ENCODE measurements at regions of chr5 and their contacts with region 1.

Region 1: DNA sequence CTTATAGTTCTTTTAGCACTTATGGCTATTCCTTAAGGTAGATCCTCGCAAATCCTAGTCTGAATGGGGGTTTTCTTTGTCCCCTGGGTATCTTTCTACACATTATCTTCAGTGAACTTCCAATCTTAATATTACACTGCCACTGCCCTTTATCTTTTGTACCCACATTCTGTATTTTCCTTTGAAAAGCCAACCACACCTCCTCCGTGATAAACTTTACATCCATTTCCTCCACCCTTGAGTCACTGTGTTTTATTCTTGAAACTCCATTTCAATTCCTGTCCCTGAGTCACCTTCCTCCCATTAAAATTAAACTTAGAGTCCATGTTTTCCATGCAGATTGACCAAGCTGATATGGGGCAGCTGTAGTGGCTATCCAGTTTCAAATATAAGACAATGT is 43.2 kb upstream of the RICTOR start:
- DNase-seq: no peak
- H3K4me3 ChIP-seq: no peak overlapping the region
- H3K4me3 Mint-ChIP-seq: no peak overlapping the region
- H3K27ac ChIP-seq: no peak overlapping the region
- H3K27ac Mint-ChIP-seq: peak overlapping the region in 6 of 7 donors; percentile 61 to 78 (median 70)
- H3K4me1 ChIP-seq: peaks cover 26% of the 10 kb centered on the region
- H3K4me1 Mint-ChIP-seq: peaks cover 20 to 44% (median 27%) of the 10 kb centered on the region in 4 donors
- H3K27me3 ChIP-seq: no peaks in the 10 kb centered on the region
- H3K27me3 Mint-ChIP-seq: no peaks in the 10 kb centered on the region

Region 2: GRCh38 chr5:39132128-39132447 is 14.7 kb after region 1 on chr5:
- CTCF ChIA-PET with region 1: no interaction called
- POLR2A ChIA-PET with region 1: no interaction called
- intact Hi-C with region 1: loop called (anchors 2 kb)
- DNase-seq: no peak
- H3K4me3 ChIP-seq: no peak overlapping the region
- H3K4me3 Mint-ChIP-seq: no peak overlapping the region
- H3K27ac ChIP-seq: no peak overlapping the region
- H3K27ac Mint-ChIP-seq: peak overlapping the region in 6 of 7 donors; percentile 17 to 84 (median 64)
- H3K4me1 ChIP-seq: peaks cover 27% of the 10 kb centered on the region
- H3K4me1 Mint-ChIP-seq: peaks cover 28 to 53% (median 44%) of the 10 kb centered on the region in 4 donors
- H3K27me3 ChIP-seq: no peaks in the 10 kb centered on the region
- H3K27me3 Mint-ChIP-seq: no peaks in the 10 kb centered on the region

Region 3: GRCh38 chr5:39187831-39188731 is 70.7 kb after region 1 on chr5:
- CTCF ChIA-PET with region 1: no interaction called
- POLR2A ChIA-PET with region 1: no interaction called
- intact Hi-C with region 1: no loop called
- DNase-seq: peak in 2 of 5 donors; percentile 58 to 70
- H3K4me3 ChIP-seq: peak overlapping the region in 1 of 2 donors; percentile 9
- H3K4me3 Mint-ChIP-seq: peak overlapping the region; percentile 84 to 96 (median 90)
- H3K27ac ChIP-seq: peak overlapping the region; percentile 59
- H3K27ac Mint-ChIP-seq: peak overlapping the region; percentile 95 to 99 (median 99)
- H3K4me1 ChIP-seq: peaks cover 98% of the 10 kb centered on the region
- H3K4me1 Mint-ChIP-seq: peaks cover 71 to 96% (median 83%) of the 10 kb centered on the region in 4 donors
- H3K27me3 ChIP-seq: no peaks in the 10 kb centered on the region
- H3K27me3 Mint-ChIP-seq: no peaks in the 10 kb centered on the region

Region 4: GRCh38 chr5:39520232-39520572 is 402.8 kb after region 1 on chr5:
- CTCF ChIA-PET with region 1: no interaction called
- POLR2A ChIA-PET with region 1: no interaction called
- intact Hi-C with region 1: no loop called
- DNase-seq: no peak
- H3K4me3 ChIP-seq: no peak overlapping the region
- H3K4me3 Mint-ChIP-seq: no peak overlapping the region
- H3K27ac ChIP-seq: no peak overlapping the region
- H3K27ac Mint-ChIP-seq: no peak overlapping the region
- H3K4me1 ChIP-seq: no peaks in the 10 kb centered on the region
- H3K4me1 Mint-ChIP-seq: no peaks in the 10 kb centered on the region
- H3K27me3 ChIP-seq: no peaks in the 10 kb centered on the region
- H3K27me3 Mint-ChIP-seq: peaks cover 7 to 16% of the 10 kb centered on the region in 2 donors